ENCODE measurements at regions of chr4 and their contacts with region 1.

Region 1: DNA sequence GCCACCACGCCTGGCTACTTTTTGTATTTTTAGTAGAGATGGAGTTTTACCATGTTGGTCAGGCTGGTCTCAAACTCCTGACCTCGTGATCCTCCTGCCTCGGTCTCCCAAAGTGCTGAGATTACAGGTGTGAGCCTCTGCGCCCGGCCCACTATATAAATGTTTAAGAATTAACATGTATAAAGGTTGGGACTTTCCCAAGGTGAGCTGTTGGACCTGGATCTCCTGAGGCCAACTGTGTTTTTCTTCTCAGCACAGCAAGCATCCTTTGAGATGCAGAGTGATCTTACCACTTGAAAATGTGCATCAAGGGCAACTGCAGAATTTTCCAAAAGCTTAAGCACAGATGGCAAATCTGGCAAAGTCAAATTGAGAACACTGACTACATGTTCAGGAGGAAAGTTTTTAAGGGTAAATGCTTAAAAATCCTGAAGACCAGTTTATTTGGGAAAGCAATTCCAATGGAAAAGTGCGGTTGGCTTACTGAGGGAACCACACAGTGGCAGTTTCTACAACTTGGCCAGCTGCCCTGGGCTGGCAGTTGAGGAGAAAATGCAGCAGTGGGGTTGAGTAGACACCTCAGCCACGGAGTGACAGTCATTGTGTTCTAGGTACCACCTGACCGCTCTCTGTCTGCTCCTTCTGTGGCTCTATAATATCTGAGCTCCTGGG is 168.9 kb downstream of the CBR4 start:
- DNase-seq: no peak
- ATAC-seq: no peak
- H3K4me3 ChIP-seq: no peak overlapping the region
- H3K27ac ChIP-seq: peak overlapping the region; percentile 21; the same call in 1 of the 2 replicates
- H3K4me1 ChIP-seq: peaks cover 38% of the 10 kb centered on the region
- H3K27me3 ChIP-seq: no peaks in the 10 kb centered on the region
- CTCF ChIP-seq: no peak
- POLR2A ChIP-seq: no peak
- RAD21 ChIP-seq: no peak

Region 2: GRCh38 chr4:168631241-168632162 is 209.6 kb before region 1 on chr4:
- CTCF ChIA-PET with region 1: no interaction called
- POLR2A ChIA-PET with region 1: no interaction called
- dilution Hi-C with region 1: no loop called
- in situ Hi-C with region 1: no loop called
- intact Hi-C with region 1: no loop called
- DNase-seq: peak; percentile 55
- ATAC-seq: peak; percentile 78
- H3K4me3 ChIP-seq: peak overlapping the region; percentile 54
- H3K27ac ChIP-seq: peak overlapping the region; percentile 59
- H3K4me1 ChIP-seq: peaks cover 18% of the 10 kb centered on the region
- H3K27me3 ChIP-seq: no peaks in the 10 kb centered on the region
- CTCF ChIP-seq: peak; percentile 45
- POLR2A ChIP-seq: no peak
- RAD21 ChIP-seq: peak; percentile 50

Region 3: GRCh38 chr4:168666531-168666930 is 174.6 kb before region 1 on chr4:
- CTCF ChIA-PET with region 1: no interaction called
- POLR2A ChIA-PET with region 1: no interaction called
- dilution Hi-C with region 1: no loop called
- in situ Hi-C with region 1: no loop called
- intact Hi-C with region 1: no loop called
- DNase-seq: peak; percentile 55
- ATAC-seq: peak; percentile 48
- H3K4me3 ChIP-seq: no peak overlapping the region
- H3K27ac ChIP-seq: no peak overlapping the region
- H3K4me1 ChIP-seq: peaks cover 1% of the 10 kb centered on the region; the same call in 1 of the 2 replicates
- H3K27me3 ChIP-seq: no peaks in the 10 kb centered on the region; the same call in 1 of the 2 replicates
- CTCF ChIP-seq: no peak
- POLR2A ChIP-seq: no peak
- RAD21 ChIP-seq: no peak

Region 4: GRCh38 chr4:168723020-168723419 is 118.1 kb before region 1 on chr4:
- CTCF ChIA-PET with region 1: no interaction called
- POLR2A ChIA-PET with region 1: no interaction called
- dilution Hi-C with region 1: no loop called
- in situ Hi-C with region 1: no loop called
- intact Hi-C with region 1: no loop called
- DNase-seq: peak; percentile 75
- ATAC-seq: peak; percentile 45; the same call in 1 of the 2 replicates
- H3K4me3 ChIP-seq: no peak overlapping the region
- H3K27ac ChIP-seq: no peak overlapping the region
- H3K4me1 ChIP-seq: peaks cover 15% of the 10 kb centered on the region
- H3K27me3 ChIP-seq: no peaks in the 10 kb centered on the region
- CTCF ChIP-seq: no peak
- POLR2A ChIP-seq: no peak
- RAD21 ChIP-seq: no peak

Region 5: GRCh38 chr4:168743601-168744000 is 97.5 kb before region 1 on chr4:
- CTCF ChIA-PET with region 1: no interaction called
- POLR2A ChIA-PET with region 1: interaction called, 20 read pairs
- dilution Hi-C with region 1: no loop called
- in situ Hi-C with region 1: no loop called
- intact Hi-C with region 1: no loop called
- DNase-seq: peak; percentile 85
- ATAC-seq: peak; percentile 78
- H3K4me3 ChIP-seq: no peak overlapping the region
- H3K27ac ChIP-seq: peak overlapping the region; percentile 26; the same call in 1 of the 2 replicates
- H3K4me1 ChIP-seq: peaks cover 6% of the 10 kb centered on the region
- H3K27me3 ChIP-seq: no peaks in the 10 kb centered on the region
- CTCF ChIP-seq: no peak
- POLR2A ChIP-seq: no peak
- RAD21 ChIP-seq: no peak

Region 6: GRCh38 chr4:168825975-168826374 is 15.2 kb before region 1 on chr4:
- CTCF ChIA-PET with region 1: no interaction called
- POLR2A ChIA-PET with region 1: no interaction called
- dilution Hi-C with region 1: no loop called
- in situ Hi-C with region 1: no loop called
- intact Hi-C with region 1: no loop called
- DNase-seq: peak; percentile 81
- ATAC-seq: peak; percentile 90
- H3K4me3 ChIP-seq: no peak overlapping the region
- H3K27ac ChIP-seq: no peak overlapping the region
- H3K4me1 ChIP-seq: no peaks in the 10 kb centered on the region; the same call in 1 of the 2 replicates
- H3K27me3 ChIP-seq: no peaks in the 10 kb centered on the region
- CTCF ChIP-seq: no peak
- POLR2A ChIP-seq: no peak
- RAD21 ChIP-seq: no peak

Region 7: GRCh38 chr4:168877511-168878491 is 36.7 kb after region 1 on chr4:
- CTCF ChIA-PET with region 1: no interaction called
- POLR2A ChIA-PET with region 1: no interaction called
- dilution Hi-C with region 1: no loop called
- in situ Hi-C with region 1: no loop called
- intact Hi-C with region 1: loop called (anchors 2 kb)
- DNase-seq: no peak
- ATAC-seq: peak; percentile 53
- H3K4me3 ChIP-seq: no peak overlapping the region; the same call in 1 of the 2 replicates
- H3K27ac ChIP-seq: peak overlapping the region; percentile 45
- H3K4me1 ChIP-seq: peaks cover 27% of the 10 kb centered on the region
- H3K27me3 ChIP-seq: no peaks in the 10 kb centered on the region
- CTCF ChIP-seq: no peak
- POLR2A ChIP-seq: no peak
- RAD21 ChIP-seq: 0 out of 2 replicates have a peak, but pooled peaks have one; percentile 1